Activated CD8-positive, alpha-beta T cell treated with anti-CD3 and anti-CD28 coated beads for 36 hours (primary cell): ENCODE measurements at regions of chr16 and their contacts with region 1.

Region 1: GRCh38 chr16:22070361-22071330 is 21.7 kb upstream of the VWA3A start:
- DNase-seq: no peak
- ATAC-seq: no peak
- H3K4me3 Mint-ChIP-seq: no peak overlapping the region
- H3K27ac Mint-ChIP-seq: no peak overlapping the region
- H3K4me1 Mint-ChIP-seq: peaks cover 1% of the 10 kb centered on the region
- H3K27me3 Mint-ChIP-seq: no peaks in the 10 kb centered on the region
- CTCF ChIP-seq: no peak

Region 2: DNA sequence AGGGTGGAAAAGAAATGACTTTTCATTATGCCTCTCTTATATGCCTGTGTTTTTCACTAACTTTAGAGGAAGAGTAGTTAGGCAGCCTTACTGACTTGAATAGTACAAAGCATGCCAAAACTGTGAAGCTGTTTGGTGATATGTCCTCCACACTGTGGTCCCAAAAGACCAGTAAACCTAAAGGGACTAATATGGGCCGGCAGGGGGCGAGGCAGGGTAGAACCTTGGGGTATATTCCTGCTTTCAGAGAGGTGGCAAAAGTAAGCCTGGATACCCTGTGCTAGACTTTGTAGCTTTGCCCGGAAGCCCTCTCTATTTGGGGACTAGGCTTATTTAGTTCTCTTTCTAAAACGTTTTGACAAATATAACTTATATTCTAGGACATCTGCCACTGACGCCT is 14.8 kb before region 1 on chr16:
- CTCF ChIA-PET with region 1: interaction called, 10 read pairs
- POLR2A ChIA-PET with region 1: no interaction called
- intact Hi-C with region 1: no loop called
- DNase-seq: no peak
- ATAC-seq: no peak
- H3K4me3 Mint-ChIP-seq: no peak overlapping the region
- H3K27ac Mint-ChIP-seq: no peak overlapping the region
- H3K4me1 Mint-ChIP-seq: peaks cover 39% of the 10 kb centered on the region
- H3K27me3 Mint-ChIP-seq: no peaks in the 10 kb centered on the region
- CTCF ChIP-seq: no peak

Region 3: GRCh38 chr16:22109258-22109898 is 38.7 kb after region 1 on chr16:
- CTCF ChIA-PET with region 1: no interaction called
- POLR2A ChIA-PET with region 1: no interaction called
- intact Hi-C with region 1: no loop called
- DNase-seq: no peak
- ATAC-seq: no peak
- H3K4me3 Mint-ChIP-seq: no peak overlapping the region
- H3K27ac Mint-ChIP-seq: no peak overlapping the region
- H3K4me1 Mint-ChIP-seq: peaks cover 8% of the 10 kb centered on the region
- H3K27me3 Mint-ChIP-seq: no peaks in the 10 kb centered on the region
- CTCF ChIP-seq: no peak

Region 4: DNA sequence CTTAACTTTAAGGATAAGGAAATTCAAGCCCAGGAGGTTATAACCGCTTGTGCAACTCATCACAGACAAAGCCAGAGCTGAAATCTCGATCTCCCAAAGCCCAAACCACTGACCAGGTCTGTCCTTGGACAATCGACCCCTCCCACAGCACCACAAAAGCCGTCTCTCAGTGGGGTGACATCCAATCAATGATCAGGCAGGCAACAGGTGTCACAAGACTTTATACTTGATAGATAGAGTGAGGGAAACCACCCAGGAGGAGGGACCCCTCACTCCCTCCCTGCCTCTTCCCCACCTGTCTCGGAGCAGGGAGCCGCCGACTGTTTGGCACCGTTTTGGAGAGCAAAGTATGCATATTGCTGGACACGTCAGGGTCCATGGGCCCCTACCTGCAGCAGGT is 77.2 kb after region 1 on chr16:
- CTCF ChIA-PET with region 1: no interaction called
- POLR2A ChIA-PET with region 1: no interaction called
- intact Hi-C with region 1: no loop called
- DNase-seq: no peak
- ATAC-seq: no peak
- H3K4me3 Mint-ChIP-seq: no peak overlapping the region
- H3K27ac Mint-ChIP-seq: no peak overlapping the region
- H3K4me1 Mint-ChIP-seq: no peaks in the 10 kb centered on the region
- H3K27me3 Mint-ChIP-seq: peaks cover 2% of the 10 kb centered on the region
- CTCF ChIP-seq: no peak